Endothelial cell of umbilical vein (primary cell): ENCODE measurements at regions of chr12 and their contacts with region 1.

Region 1: DNA sequence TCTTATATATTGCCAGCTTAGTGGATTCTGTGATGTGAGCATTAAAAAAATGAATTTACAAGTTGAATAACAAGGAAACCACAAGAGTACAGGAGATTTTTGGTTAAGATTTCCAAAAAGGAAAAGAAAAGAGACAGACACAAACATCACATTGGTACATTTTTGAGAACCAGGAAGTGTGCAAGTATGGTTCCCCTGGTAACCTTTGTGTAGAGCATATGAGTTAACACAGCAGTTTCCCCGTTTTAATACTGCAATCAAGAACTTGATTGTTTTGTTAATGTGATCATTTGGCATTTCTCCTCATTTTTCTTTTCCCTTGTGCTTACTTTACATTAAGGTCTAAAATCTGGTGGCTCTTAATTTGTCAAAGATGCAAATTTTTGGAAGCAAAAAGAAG is 490.4 kb upstream of the ATP2B1 start:
- DNase-seq: peak; percentile 91
- H3K4me3 ChIP-seq: peak overlapping the region in 1 of 3 experiments; percentile 17
- H3K27ac ChIP-seq: peak overlapping the region; percentile 95
- H3K4me1 ChIP-seq: peaks cover 27% of the 10 kb centered on the region
- H3K27me3 ChIP-seq: no peaks in the 10 kb centered on the region
- CTCF ChIP-seq: no peak
- POLR2A ChIP-seq: no peak

Region 2: DNA sequence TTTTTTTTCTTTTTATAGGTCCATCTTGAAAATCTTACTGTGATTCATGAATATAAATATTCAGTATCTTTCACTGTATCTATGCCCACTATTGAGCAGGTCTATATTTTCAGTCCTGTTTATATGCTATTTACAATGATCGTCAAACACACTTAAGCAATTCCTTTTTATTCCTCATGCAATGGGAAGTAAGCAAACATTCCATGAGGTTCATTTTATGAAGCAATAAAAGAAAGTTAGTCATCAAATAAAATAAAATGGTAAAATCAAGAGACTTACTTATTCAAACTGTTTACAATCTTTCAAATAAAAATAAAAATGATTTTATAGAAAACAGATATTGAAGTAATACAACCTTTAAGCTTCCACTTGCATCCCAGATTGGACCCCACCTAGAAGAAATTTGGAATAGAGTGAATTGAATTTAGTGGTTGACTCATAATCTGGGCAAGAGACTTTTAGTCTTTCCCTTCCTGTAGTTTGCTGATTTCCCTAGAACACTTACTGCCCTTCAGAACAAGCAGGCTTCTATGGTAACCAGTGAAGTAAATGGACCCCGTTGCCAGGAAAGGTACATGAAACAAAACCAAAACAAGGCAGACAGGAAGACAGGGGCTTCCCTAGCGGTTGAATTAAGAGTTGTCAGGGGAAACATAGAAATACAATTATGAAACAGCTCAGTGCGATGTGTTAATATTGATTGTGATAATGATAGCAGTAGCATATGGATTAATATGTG is 249.4 kb before region 1 on chr12:
- CTCF ChIA-PET with region 1: no interaction called
- POLR2A ChIA-PET with region 1: no interaction called
- dilution Hi-C with region 1: no loop called
- intact Hi-C with region 1: loop called (anchors 1 kb)
- DNase-seq: peak; percentile 98
- H3K4me3 ChIP-seq: no peak overlapping the region
- H3K27ac ChIP-seq: peak overlapping the region; percentile 99
- H3K4me1 ChIP-seq: peaks cover 33% of the 10 kb centered on the region
- H3K27me3 ChIP-seq: no peaks in the 10 kb centered on the region
- CTCF ChIP-seq: peak; percentile 21 to 36
- POLR2A ChIP-seq: no peak

Region 3: GRCh38 chr12:90042920-90043641 is 155.9 kb before region 1 on chr12:
- CTCF ChIA-PET with region 1: no interaction called
- POLR2A ChIA-PET with region 1: no interaction called
- dilution Hi-C with region 1: no loop called
- intact Hi-C with region 1: no loop called
- DNase-seq: peak; percentile 13
- H3K4me3 ChIP-seq: no peak overlapping the region
- H3K27ac ChIP-seq: no peak overlapping the region
- H3K4me1 ChIP-seq: no peaks in the 10 kb centered on the region
- H3K27me3 ChIP-seq: no peaks in the 10 kb centered on the region
- CTCF ChIP-seq: no peak
- POLR2A ChIP-seq: no peak

Region 4: DNA sequence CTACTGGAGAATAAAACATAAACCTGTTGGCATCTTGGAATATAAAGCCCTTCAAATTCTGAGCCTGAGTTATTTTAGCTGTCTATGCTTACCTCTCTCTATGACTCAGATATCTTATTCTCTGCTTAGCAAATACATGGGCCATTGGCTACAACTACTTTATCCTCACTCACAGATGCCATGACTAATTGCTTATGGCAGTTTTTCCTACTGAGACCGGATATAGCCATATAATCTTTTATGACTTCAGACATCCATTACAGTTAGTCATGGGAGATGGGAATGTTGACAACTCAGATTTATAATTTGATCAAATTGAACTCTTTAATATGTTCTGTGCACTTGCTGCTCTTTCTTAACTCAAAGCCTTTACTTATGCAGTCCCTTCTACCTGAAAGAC is 12.0 kb after region 1 on chr12:
- CTCF ChIA-PET with region 1: no interaction called
- POLR2A ChIA-PET with region 1: no interaction called
- dilution Hi-C with region 1: no loop called
- intact Hi-C with region 1: loop called (anchors 1 kb)
- DNase-seq: peak; percentile 96
- H3K4me3 ChIP-seq: no peak overlapping the region
- H3K27ac ChIP-seq: peak overlapping the region; percentile 85
- H3K4me1 ChIP-seq: peaks cover 16% of the 10 kb centered on the region
- H3K27me3 ChIP-seq: no peaks in the 10 kb centered on the region
- CTCF ChIP-seq: no peak
- POLR2A ChIP-seq: peak; percentile 62

Region 5: DNA sequence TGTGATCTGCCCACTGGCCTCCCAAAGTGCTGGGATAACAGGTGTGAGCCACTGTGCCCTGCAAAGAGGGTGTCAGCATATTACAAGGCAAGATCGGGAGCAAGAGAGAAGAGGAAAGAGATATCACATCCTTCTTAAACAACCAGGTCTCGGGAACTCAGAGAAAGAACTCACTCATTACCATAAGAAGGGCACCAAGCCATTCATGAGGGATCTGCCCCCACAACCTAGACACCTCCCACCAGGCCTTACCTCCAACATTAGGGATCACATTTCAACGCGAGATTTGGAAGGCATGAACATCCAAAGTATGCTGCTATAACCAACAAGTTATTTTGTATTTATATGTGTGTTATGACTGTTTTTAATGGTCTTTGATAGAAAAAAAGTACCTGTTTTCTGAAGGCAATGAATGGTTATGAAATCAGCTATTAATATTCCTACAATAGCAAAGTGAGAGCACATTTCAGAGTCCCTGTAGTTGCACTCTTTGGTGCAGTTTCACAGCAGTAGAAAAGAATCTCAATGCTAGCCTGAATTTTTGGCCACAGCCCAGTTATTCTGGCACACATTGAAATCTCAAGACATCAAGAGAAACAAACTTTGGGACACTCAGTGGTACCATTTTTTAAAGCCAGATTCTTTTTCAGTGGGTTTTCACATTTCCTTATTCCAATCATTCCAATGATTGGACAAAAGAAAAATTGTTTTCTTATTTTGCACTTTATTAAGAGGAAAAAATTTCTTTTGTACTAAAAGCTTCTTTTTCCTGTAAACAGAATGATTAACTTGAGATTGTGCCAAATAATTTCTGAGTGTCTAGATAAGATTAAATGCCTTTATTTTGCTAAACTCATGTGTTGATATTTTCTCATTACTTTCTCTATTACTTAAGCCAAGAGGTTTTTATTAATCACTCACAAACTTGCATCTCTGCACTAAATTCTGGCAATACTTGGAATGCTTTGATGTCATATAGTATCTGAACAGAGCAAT is 92.3 kb after region 1 on chr12:
- CTCF ChIA-PET with region 1: no interaction called
- POLR2A ChIA-PET with region 1: no interaction called
- dilution Hi-C with region 1: no loop called
- intact Hi-C with region 1: loop called (anchors 5 kb)
- DNase-seq: peak; percentile 83
- H3K4me3 ChIP-seq: peak overlapping the region in 1 of 3 experiments; percentile 3
- H3K27ac ChIP-seq: peak overlapping the region; percentile 58
- H3K4me1 ChIP-seq: peaks cover 26% of the 10 kb centered on the region
- H3K27me3 ChIP-seq: no peaks in the 10 kb centered on the region
- CTCF ChIP-seq: no peak
- POLR2A ChIP-seq: no peak

Region 6: DNA sequence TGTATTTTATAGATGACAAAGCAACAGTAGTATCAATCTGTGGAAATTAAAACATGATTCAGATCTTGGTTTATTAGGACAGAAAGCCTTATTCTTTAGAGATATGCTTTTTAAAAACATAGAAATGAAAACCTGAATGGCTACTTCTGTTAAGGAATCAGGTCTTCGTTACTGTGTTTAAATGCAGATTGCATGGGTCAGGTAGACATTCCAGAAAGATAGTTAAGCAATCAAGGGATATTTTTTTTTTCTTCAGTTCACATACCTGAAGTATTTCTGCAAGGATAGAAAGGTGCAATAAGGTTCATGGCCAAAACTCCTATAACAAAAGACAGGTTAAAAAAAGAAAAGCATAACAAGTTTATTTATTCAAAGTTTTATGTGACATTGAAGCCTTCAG is 178.2 kb after region 1 on chr12:
- CTCF ChIA-PET with region 1: no interaction called
- POLR2A ChIA-PET with region 1: no interaction called
- dilution Hi-C with region 1: no loop called
- intact Hi-C with region 1: no loop called
- DNase-seq: peak; percentile 41
- H3K4me3 ChIP-seq: no peak overlapping the region
- H3K27ac ChIP-seq: no peak overlapping the region
- H3K4me1 ChIP-seq: peaks cover 5% of the 10 kb centered on the region
- H3K27me3 ChIP-seq: no peaks in the 10 kb centered on the region
- CTCF ChIP-seq: no peak
- POLR2A ChIP-seq: no peak

Region 7: DNA sequence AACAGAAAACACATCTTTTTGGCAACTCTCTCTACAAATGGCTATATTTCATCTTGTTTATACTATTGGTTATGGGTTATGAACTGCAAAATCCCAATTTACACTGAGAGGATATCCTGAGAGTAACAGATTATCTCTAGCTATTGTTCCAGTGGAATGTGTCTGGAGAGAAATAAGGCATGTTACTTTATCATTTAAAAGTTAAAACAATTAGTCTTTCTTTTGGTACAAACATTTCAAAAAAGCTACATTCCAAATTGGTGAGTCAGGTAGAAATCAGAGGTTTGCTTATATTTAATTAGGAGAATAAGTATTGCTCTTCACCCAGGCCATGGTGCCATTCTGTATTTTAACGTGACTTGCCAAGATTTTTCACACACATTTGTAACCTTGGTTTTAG is 344.4 kb after region 1 on chr12:
- CTCF ChIA-PET with region 1: no interaction called
- POLR2A ChIA-PET with region 1: no interaction called
- dilution Hi-C with region 1: no loop called
- intact Hi-C with region 1: loop called (anchors 5 kb)
- DNase-seq: peak; percentile 93
- H3K4me3 ChIP-seq: no peak overlapping the region
- H3K27ac ChIP-seq: peak overlapping the region; percentile 97
- H3K4me1 ChIP-seq: peaks cover 18% of the 10 kb centered on the region
- H3K27me3 ChIP-seq: no peaks in the 10 kb centered on the region
- CTCF ChIP-seq: no peak
- POLR2A ChIP-seq: peak; percentile 55